B cell (primary cell): ENCODE measurements at regions of chrX and their contacts with region 1.

Region 1: DNA sequence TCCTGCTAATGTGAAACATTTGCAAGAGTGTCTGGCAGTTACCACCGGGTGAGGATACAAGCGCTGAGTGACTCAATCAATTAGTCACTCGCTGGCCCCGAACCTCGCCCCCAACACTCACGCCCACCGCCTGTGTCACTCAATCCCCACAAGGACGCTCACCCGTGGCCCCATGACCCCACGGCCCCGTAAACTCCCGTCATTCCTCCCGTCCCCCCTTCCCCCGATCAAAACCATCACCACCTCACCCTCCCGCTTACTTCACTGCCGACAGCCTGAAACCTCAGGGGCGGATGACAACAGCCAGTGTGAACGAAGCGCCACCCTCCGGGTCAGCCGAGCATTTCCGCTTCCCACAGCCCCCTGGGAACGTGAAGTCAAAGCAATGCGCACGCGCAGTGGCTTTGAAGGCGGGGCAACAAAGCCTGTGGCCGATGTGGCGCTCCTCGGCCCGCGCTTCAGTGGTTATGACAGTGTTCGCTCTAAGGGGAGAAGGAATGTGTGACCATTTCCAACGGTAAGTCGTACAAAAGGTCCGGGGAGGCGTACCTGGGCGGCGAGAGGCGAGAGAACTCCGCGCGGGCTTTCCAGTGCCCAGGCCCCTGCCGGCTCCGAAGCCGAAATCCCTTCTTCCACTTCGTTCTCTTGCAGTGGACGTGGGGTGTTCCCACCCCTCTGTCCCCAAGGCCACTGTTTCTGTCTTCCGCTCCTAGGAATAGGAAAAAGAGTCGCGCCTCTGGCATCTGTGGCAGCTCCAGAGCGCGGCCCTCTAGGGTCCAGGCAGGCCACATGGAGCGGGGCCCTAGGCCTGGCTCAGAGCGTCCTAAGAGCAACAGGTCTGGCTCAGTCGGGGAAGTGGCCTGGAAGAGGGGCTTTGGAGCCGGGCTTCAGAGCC is at the start of gene ZNF674:
- DNase-seq: peak; percentile 93
- ATAC-seq: peak; percentile 93
- H3K4me3 ChIP-seq: peak within 1 kb of the TSS; percentile 46 to 81 (median 76)
- H3K4me3 Mint-ChIP-seq: peak within 1 kb of the TSS; percentile 92
- H3K27ac ChIP-seq: peak within 1 kb of the TSS; percentile 64 to 81
- H3K27ac Mint-ChIP-seq: peak within 1 kb of the TSS; percentile 95
- H3K4me1 ChIP-seq: peaks cover 5 to 17% of the 10 kb centered on the region in 2 donors
- H3K4me1 Mint-ChIP-seq: peaks cover 28% of the 10 kb centered on the region
- H3K27me3 ChIP-seq: no peaks in the 10 kb centered on the region
- H3K27me3 Mint-ChIP-seq: no peaks in the 10 kb centered on the region
- CTCF ChIP-seq: no peak
- total RNA-seq, gene ZNF674: 2.3 and 3.3 TPM in 2 replicates

Region 2: DNA sequence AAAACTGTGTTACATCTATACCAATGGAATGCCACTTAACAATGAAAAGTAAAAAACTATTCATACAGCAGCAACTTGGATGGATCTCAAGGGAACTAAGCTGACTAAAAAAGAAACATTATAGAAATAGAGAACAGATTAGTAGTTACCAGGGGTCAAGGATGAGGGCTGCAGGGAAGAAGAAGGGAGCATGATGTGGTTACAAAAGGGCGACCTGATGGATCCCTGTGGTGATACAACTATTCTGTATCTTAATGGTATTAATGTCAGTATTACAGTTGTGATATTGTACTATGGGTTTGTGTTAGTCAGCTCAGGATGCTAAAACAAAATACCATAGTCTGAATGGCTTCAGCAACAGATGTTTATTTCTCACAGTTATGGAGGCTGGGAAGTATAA is 190.9 kb before region 1 on chrX:
- CTCF ChIA-PET with region 1: no interaction called
- POLR2A ChIA-PET with region 1: no interaction called
- intact Hi-C with region 1: no loop called
- DNase-seq: no peak
- ATAC-seq: no peak
- H3K4me3 ChIP-seq: no peak overlapping the region
- H3K4me3 Mint-ChIP-seq: no peak overlapping the region
- H3K27ac ChIP-seq: no peak overlapping the region
- H3K27ac Mint-ChIP-seq: no peak overlapping the region
- H3K4me1 ChIP-seq: no peaks in the 10 kb centered on the region
- H3K4me1 Mint-ChIP-seq: no peaks in the 10 kb centered on the region
- H3K27me3 ChIP-seq: no peaks in the 10 kb centered on the region
- H3K27me3 Mint-ChIP-seq: no peaks in the 10 kb centered on the region
- CTCF ChIP-seq: no peak

Region 3: DNA sequence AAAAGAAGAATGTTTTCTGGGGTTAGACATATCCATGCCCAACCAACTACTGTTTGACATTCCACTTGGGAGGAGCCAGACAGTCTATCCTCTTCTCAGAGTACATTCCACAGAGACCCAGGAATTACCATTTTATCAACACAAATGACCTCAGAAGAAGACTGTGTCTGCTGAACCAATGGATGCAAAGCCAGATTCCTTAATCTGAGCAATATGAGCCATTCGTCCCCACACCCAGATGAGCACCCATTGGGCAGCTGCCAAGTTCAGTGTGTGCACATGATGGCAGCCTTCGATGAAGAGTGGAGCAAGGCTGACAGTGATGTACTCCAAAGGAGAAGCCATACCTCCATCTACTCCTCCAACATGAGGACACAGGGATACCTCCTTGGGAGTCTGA is 111.5 kb before region 1 on chrX:
- CTCF ChIA-PET with region 1: no interaction called
- POLR2A ChIA-PET with region 1: no interaction called
- intact Hi-C with region 1: no loop called
- DNase-seq: no peak
- ATAC-seq: no peak
- H3K4me3 ChIP-seq: no peak overlapping the region
- H3K4me3 Mint-ChIP-seq: no peak overlapping the region
- H3K27ac ChIP-seq: no peak overlapping the region
- H3K27ac Mint-ChIP-seq: no peak overlapping the region
- H3K4me1 ChIP-seq: no peaks in the 10 kb centered on the region
- H3K4me1 Mint-ChIP-seq: no peaks in the 10 kb centered on the region
- H3K27me3 ChIP-seq: no peaks in the 10 kb centered on the region
- H3K27me3 Mint-ChIP-seq: no peaks in the 10 kb centered on the region
- CTCF ChIP-seq: no peak

Region 4: DNA sequence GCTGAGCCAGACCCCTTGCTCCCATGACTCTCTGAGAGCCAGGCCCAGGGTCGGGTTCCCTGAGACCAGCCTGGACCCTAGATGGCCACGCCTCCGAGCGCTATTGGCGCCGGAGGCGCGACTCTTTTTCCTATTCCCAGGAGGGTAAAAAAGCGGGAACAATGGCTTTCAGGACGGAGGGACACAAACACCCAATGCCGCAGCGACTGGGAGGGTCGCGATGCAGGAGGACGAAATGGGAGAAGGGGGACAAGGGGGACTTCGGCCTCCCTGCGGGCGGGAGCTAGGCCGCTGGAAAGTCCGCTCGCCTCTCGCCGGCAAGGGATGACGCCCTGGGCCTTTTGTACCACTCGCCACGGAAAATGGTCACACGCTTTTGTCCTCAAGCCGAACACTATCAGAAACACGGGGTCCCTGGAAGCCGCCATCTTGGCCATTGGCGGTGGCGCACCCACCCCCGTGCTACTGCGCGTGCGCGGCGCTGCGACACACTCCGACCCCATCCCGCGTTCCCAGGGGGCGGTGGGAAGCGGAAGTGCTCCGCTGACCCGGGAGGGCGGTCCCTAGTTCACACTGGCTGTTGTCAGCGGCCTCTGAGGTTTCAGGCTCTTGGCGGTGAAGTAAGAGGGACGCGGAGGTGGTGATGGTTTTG is 98.5 kb before region 1 on chrX:
- CTCF ChIA-PET with region 1: no interaction called
- POLR2A ChIA-PET with region 1: no interaction called
- intact Hi-C with region 1: loop called (anchors 1 kb)
- DNase-seq: peak; percentile 89
- ATAC-seq: peak; percentile 98
- H3K4me3 ChIP-seq: peak overlapping the region; percentile 17 to 84 (median 79)
- H3K4me3 Mint-ChIP-seq: peak overlapping the region; percentile 87
- H3K27ac ChIP-seq: peak overlapping the region; percentile 76 to 85
- H3K27ac Mint-ChIP-seq: peak overlapping the region; percentile 90
- H3K4me1 ChIP-seq: peaks cover 0 to 15% of the 10 kb centered on the region in 2 donors
- H3K4me1 Mint-ChIP-seq: peaks cover 8% of the 10 kb centered on the region
- H3K27me3 ChIP-seq: no peaks in the 10 kb centered on the region
- H3K27me3 Mint-ChIP-seq: no peaks in the 10 kb centered on the region
- CTCF ChIP-seq: no peak

Region 5: DNA sequence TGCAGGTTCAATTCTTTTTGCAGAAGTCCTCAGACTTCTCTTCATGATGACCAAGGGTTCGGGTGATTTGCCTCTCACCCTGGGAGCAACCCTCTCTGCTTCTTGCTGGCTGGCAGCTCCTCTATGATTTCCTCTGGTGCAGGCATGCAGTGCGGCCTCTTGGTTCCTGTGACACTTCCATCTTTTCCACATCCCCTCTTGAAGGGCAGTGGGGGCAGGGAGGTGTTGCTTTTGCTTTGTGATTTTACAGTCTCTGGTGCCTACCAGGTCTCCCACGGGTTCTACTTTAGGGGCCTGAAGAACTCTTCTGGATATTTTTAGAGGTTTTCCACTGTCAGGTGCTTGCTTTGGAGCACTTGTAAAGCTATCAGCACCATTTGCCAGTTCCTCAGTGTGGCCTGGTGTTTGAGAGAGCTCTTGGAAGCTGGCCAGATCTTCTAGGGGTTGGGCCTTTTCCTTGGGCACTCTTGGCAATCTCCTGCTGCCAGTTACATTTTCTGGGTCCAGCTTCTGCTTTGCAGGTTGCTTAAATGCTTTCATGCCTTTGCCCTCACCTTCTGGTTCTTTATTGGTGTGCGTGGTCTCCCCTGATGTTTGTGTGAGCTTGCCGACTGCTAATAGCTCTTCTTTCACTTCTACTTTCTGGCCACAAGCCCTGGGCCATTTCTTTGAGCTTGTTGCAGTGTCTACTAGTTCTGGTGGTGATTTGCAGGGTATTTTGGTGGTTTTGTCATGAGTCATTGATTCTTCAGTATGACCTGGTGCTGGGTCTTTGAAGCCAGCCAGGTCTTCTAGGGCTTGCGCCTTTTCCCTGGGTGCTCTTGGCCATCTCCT is 16.7 kb after region 1 on chrX:
- CTCF ChIA-PET with region 1: no interaction called
- POLR2A ChIA-PET with region 1: no interaction called
- intact Hi-C with region 1: loop called (anchors 2 kb)
- DNase-seq: peak; percentile 64
- ATAC-seq: peak; percentile 97
- H3K4me3 ChIP-seq: no peak overlapping the region
- H3K4me3 Mint-ChIP-seq: peak overlapping the region; percentile 20
- H3K27ac ChIP-seq: no peak overlapping the region
- H3K27ac Mint-ChIP-seq: peak overlapping the region; percentile 59
- H3K4me1 ChIP-seq: peaks cover 14 to 15% of the 10 kb centered on the region in 2 donors
- H3K4me1 Mint-ChIP-seq: peaks cover 17% of the 10 kb centered on the region
- H3K27me3 ChIP-seq: peaks cover 0 to 3% (median 0%) of the 10 kb centered on the region in 4 experiments
- H3K27me3 Mint-ChIP-seq: peaks cover 27% of the 10 kb centered on the region
- CTCF ChIP-seq: no peak